ENCODE measurements at regions of chr13 and their contacts with region 1.

Region 1: GRCh38 chr13:46492946-46493345 is 60.0 kb upstream of the LRCH1 start:
- DNase-seq: no peak
- H3K4me3 Mint-ChIP-seq: no peak overlapping the region
- H3K27ac Mint-ChIP-seq: no peak overlapping the region
- H3K4me1 Mint-ChIP-seq: peaks cover 9% of the 10 kb centered on the region
- H3K27me3 Mint-ChIP-seq: peaks cover 5% of the 10 kb centered on the region

Region 2: DNA sequence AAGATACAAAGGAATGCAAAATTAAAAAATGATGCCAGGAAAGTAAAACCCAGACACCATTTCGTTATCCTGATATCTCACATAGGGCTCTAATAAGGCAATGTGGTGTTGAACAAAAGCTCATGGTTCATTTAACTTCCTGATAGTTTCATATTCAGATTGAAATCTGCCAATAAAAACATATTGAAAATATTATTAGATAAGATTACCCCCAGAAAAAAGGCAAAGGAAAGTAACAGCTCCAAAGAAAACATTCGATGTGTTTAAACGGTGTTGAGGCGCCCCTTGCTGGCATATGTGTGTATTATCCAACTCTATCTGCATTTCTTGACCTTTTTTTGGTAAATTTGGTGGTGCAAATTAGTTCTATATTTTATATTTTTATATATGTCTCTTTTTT is 228.1 kb after region 1 on chr13:
- intact Hi-C with region 1: loop called (anchors 1 kb)
- DNase-seq: no peak
- H3K4me3 Mint-ChIP-seq: no peak overlapping the region
- H3K27ac Mint-ChIP-seq: no peak overlapping the region
- H3K4me1 Mint-ChIP-seq: peaks cover 12% of the 10 kb centered on the region
- H3K27me3 Mint-ChIP-seq: no peaks in the 10 kb centered on the region

Region 3: DNA sequence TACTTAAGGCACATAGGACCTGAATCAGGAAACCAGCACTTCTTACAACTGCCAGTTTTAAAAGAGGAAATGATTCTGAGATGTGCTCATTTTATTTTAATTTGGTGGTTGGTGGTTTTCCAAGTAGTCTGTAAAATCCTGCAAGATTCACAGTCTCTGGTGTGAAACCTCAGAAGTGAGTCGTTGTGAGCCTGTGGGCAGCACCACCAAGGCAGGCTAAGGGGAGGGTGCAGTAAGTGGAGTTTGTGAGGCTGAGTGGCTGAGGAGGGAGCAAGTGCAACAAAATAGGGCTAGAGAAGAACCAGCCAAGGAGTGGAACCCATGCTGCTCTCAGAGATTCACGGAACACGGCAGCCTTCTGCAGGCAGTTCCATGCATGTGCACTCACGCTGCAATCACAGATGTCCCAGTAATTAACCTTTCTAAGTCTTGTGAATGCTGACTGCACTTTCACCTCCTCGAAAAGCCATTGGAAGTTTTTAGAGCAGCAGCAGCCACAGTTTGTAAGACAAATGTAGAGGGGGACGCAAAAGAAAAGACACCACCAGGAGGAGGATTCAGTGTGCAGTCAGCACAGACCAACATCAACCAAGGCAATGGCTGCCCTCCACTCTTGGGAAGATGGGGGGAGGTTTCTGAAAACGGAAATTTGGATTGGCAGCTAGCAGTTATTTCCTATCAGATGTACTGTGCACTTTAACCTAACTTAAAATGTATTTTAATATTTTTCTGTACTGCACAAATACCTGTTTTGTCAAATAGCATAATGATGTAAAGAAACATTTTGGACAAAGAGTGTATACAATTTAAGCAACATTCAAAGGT is 259.1 kb after region 1 on chr13:
- intact Hi-C with region 1: loop called (anchors 1 kb)
- DNase-seq: peak; percentile 66
- H3K4me3 Mint-ChIP-seq: peak overlapping the region; percentile 5
- H3K27ac Mint-ChIP-seq: peak overlapping the region; percentile 69
- H3K4me1 Mint-ChIP-seq: peaks cover 47% of the 10 kb centered on the region
- H3K27me3 Mint-ChIP-seq: no peaks in the 10 kb centered on the region